ENCODE measurements at regions of chr7 and their contacts with region 1.

Region 1: GRCh38 chr7:28037220-28038010 is 143.2 kb downstream of the JAZF1 start:
- DNase-seq: peak; percentile 96
- H3K4me3 ChIP-seq: peak overlapping the region in 1 of 3 experiments; percentile 10
- H3K27ac ChIP-seq: peak overlapping the region; percentile 73
- H3K4me1 ChIP-seq: peaks cover 65% of the 10 kb centered on the region
- H3K27me3 ChIP-seq: no peaks in the 10 kb centered on the region
- CTCF ChIP-seq: no peak

Region 2: DNA sequence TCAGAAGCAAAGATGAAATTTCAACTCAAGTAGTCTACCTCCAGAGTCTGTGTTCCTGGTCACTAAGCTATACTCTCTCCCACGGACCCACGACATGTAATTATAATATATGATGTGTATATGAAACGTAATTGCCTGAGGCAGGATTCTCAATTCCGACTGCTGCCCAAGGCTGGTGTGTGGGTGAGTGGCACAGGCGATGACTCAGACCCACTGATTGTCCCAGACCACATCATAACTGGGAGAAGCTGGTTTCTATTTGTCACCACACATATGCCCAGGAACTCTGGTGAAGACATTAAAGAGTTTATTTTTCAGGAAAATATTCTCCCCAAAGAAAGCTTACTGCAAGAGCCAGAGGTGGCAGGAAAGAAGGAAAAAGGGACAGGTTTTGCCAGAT is 76.2 kb before region 1 on chr7:
- CTCF ChIA-PET with region 1: no interaction called
- dilution Hi-C with region 1: loop called (anchors 5 kb)
- in situ Hi-C with region 1: no loop called
- intact Hi-C with region 1: no loop called
- DNase-seq: peak; percentile 72
- H3K4me3 ChIP-seq: no peak overlapping the region
- H3K27ac ChIP-seq: no peak overlapping the region
- H3K4me1 ChIP-seq: peaks cover 7% of the 10 kb centered on the region
- H3K27me3 ChIP-seq: no peaks in the 10 kb centered on the region
- CTCF ChIP-seq: no peak

Region 3: GRCh38 chr7:28605427-28606085 is 568.1 kb after region 1 on chr7:
- CTCF ChIA-PET with region 1: no interaction called
- dilution Hi-C with region 1: no loop called
- in situ Hi-C with region 1: no loop called
- intact Hi-C with region 1: no loop called
- DNase-seq: no peak
- H3K4me3 ChIP-seq: no peak overlapping the region
- H3K27ac ChIP-seq: no peak overlapping the region
- H3K4me1 ChIP-seq: no peaks in the 10 kb centered on the region
- H3K27me3 ChIP-seq: no peaks in the 10 kb centered on the region
- CTCF ChIP-seq: no peak